WTC11 (cell line): ENCODE measurements at regions of chr5 and their contacts with region 1.

Region 1: GRCh38 chr5:54310433-54311175 is at the start of gene ARL15:
- DNase-seq: peak; percentile 98
- ATAC-seq: peak; percentile 90
- H3K4me3 Mint-ChIP-seq: peak within 1 kb of the TSS; percentile 92
- H3K27ac Mint-ChIP-seq: peak within 1 kb of the TSS; percentile 93
- H3K4me1 Mint-ChIP-seq: peaks cover 36% of the 10 kb centered on the region
- H3K27me3 Mint-ChIP-seq: peaks cover 20% of the 10 kb centered on the region
- CTCF ChIP-seq: no peak
- total RNA-seq, gene ARL15: 20.1 to 23.9 TPM (median 21.5 TPM) in 3 replicates

Region 2: DNA sequence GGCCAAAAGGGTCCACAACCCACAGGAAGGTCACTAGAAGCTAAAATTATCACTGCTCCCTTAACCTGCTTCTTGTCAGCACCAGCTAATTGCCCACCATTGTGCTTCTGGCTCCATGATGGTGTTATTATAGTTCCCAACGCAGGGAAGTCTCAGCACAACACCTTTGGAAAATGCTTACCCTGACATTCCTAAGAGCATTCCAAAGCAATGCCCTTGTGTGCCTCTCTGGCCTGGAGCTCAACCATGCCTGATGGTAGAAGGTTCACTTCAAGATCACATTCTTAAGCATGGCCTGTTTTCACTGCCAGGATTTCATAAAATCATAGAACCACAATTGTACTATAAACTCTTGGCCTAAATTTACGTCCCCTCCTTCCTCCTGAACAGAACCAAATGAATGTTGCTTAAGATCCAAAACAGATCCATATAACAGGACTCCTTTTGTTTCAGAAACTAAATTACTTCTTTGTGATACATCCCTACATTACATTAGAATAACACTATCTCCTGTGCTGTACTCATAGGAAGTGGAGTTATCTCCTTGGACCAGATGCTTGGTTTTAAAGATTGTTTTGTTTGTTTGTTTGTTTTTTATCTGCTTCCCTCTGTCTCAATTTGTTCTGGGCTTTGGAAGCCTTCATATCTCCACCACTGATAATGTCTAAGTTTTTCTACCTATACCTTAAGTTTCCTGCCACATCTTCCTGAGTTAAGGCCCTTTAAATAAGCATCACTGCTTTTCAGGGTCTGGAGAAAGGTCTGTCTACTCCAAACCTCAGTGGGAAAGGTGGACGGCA is 32.4 kb before region 1 on chr5:
- CTCF ChIA-PET with region 1: no interaction called
- POLR2A ChIA-PET with region 1: no interaction called
- DNase-seq: no peak
- ATAC-seq: peak; percentile 74
- H3K4me3 Mint-ChIP-seq: no peak overlapping the region
- H3K27ac Mint-ChIP-seq: peak overlapping the region; percentile 25
- H3K4me1 Mint-ChIP-seq: peaks cover 25% of the 10 kb centered on the region
- H3K27me3 Mint-ChIP-seq: no peaks in the 10 kb centered on the region
- CTCF ChIP-seq: no peak

Region 3: DNA sequence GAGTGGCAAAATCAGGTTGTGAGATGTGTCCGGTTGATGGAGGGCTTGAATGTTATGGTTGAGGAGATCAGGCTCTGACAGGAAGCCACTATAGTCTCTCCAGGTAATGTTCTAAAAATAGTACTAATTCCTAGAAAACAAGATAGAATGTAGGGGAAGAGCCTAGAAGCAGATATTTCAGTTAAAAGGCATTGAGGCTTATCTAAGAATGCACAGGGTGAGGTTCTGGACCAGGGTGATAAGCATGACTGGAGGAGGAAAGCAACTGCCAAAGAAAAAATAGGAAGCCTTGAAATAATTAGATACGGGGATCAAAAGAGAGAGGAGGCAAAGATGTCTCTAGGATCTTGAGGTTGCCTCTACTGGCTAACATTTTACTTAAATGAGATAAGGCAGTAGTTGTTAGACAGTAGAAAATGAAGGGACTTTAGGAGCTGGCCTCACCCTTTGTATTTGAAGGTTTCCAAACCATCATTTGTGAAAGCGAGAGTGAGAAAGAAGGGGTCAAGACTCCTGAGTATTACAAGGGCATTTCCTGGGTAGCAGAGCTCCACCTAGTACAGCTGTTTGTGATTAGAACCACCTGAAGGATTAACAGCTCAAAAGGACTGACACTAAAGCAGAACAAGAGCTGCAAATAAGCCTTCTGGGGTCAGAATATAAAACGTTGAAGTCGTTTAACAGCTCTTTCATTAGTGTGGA is 15.2 kb after region 1 on chr5:
- CTCF ChIA-PET with region 1: interaction called, 12 read pairs
- POLR2A ChIA-PET with region 1: interaction called, 7 read pairs
- DNase-seq: no peak
- ATAC-seq: no peak
- H3K4me3 Mint-ChIP-seq: no peak overlapping the region
- H3K27ac Mint-ChIP-seq: no peak overlapping the region
- H3K4me1 Mint-ChIP-seq: peaks cover 32% of the 10 kb centered on the region
- H3K27me3 Mint-ChIP-seq: no peaks in the 10 kb centered on the region
- CTCF ChIP-seq: no peak

Region 4: DNA sequence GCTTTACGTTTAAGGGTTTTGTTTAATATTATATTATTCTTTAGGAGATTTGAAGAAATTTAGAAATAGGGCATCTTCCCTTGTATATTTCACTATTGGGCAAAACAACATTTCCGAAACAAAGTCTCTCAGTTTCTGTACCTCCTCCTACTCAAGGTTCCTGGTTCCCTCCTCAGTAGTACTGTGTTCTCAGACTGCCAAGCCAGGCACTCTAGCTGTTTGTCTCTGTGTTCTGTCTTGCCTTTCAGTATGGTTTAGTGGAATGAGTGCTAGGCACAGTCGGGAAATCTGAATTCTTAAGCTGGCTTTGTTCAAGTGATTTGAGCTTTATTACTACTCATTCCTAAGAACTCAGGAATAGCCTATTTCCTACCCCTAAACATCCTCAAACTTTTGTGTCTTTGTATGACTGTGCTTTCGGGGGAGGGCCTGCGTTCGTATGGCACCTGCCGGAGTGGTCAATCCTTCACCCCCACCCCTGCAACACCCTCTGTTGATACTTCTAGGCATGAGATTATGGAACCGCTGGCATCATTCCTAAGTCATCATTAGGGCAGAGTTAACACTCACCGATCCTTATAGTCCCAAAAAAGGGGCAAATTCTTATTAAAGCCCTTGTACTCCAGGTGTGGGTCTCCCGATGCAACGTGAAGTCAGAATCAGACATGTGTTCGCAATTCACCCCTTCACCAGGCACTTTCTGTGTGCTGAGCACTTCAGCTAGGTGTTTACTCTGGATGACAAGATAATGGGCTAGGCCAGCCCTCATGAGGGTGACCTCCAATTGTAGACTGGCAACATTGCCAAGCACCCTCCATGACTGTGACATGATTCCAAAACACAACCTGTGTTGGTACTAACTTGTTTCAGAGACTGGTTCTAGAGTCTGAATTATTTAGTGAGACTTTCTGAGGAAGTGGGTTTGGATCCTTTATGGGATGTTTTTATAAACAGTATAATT is 231.5 kb after region 1 on chr5:
- CTCF ChIA-PET with region 1: no interaction called
- POLR2A ChIA-PET with region 1: no interaction called
- DNase-seq: no peak
- ATAC-seq: no peak
- H3K4me3 Mint-ChIP-seq: no peak overlapping the region
- H3K27ac Mint-ChIP-seq: no peak overlapping the region
- H3K4me1 Mint-ChIP-seq: no peaks in the 10 kb centered on the region
- H3K27me3 Mint-ChIP-seq: no peaks in the 10 kb centered on the region
- CTCF ChIP-seq: no peak